Ovary (tissue), 10 donors: ENCODE measurements at regions of chr14 and their contacts with region 1.

Region 1: DNA sequence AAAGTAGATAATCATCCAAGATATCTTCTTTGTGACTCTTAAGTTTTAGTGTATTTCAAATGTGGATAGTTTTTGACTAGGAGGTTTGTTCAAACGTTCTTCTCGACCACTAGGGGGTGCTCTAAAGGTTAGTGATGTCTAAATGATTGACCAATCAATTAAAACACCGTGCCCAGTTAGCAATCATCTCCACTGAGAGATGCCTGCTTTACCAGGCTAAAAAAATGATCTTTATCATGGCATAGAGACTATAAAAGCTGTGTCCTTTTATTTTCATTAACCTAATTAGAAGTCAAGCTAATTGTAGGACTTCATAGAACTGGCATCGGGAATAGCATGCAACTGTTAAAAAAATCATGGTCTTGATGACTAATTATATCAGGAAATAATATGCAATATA is 153.9 kb downstream of the PRKCH start:
- DNase-seq: no peak
- H3K4me3 ChIP-seq: no peak overlapping the region
- H3K27ac ChIP-seq: no peak overlapping the region
- H3K4me1 ChIP-seq: peaks cover 19% of the 10 kb centered on the region
- H3K27me3 ChIP-seq: no peaks in the 10 kb centered on the region
- CTCF ChIP-seq: peak in 2 of 3 donors; percentile 47 to 52
- EP300 ChIP-seq: no peak
- POLR2A ChIP-seq: no peak

Region 2: GRCh38 chr14:61561657-61562276 is 86.5 kb after region 1 on chr14:
- intact Hi-C with region 1: no loop called
- DNase-seq: peak; percentile 56 to 77 (median 70)
- H3K4me3 ChIP-seq: no peak overlapping the region
- H3K27ac ChIP-seq: peak overlapping the region in 1 of 2 donors; percentile 33
- H3K4me1 ChIP-seq: peaks cover 14% of the 10 kb centered on the region
- H3K27me3 ChIP-seq: no peaks in the 10 kb centered on the region
- CTCF ChIP-seq: no peak
- EP300 ChIP-seq: peak; percentile 77
- POLR2A ChIP-seq: no peak

Region 3: DNA sequence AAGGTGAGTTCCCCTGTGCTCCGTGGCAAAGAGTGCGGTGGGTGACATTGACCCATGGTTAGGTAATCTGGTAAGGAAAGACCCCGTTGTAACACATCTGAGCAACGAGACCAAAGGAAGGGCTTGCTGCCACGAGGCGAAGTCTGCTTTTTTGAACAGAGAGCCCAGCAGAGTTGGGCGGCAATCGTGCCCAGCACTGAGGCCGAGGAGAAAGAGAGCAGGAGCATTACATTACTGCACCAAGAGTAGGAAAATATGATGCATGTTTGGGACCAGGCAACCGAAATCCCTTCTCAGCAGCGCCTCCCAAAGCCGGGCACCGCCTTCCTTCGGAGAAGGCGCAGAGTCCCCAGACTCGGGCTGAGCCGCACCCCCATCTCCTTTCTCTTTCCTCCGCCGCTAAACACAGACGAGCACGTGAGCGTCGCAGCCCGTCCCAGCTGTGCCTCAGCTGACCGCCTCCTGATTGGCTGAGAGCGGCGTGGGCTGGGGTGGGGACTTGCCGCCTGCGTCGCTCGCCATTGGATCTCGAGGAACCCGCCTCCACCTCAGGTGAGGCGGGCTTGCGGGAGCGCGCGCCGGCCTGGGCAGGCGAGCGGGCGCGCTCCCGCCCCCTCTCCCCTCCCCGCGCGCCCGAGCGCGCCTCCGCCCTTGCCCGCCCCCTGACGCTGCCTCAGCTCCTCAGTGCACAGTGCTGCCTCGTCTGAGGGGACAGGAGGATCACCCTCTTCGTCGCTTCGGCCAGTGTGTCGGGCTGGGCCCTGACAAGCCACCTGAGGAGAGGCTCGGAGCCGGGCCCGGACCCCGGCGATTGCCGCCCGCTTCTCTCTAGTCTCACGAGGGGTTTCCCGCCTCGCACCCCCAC is 219.7 kb after region 1 on chr14 and contains the start of gene HIF1A:
- intact Hi-C with region 1: loop called in 1 of 4 experiments (anchors 10 kb)
- DNase-seq: peak; percentile 95 to 97 (median 95)
- H3K4me3 ChIP-seq: peak within 1 kb of the TSS; percentile 96
- H3K27ac ChIP-seq: peak within 1 kb of the TSS; percentile 83 to 95
- H3K4me1 ChIP-seq: peaks cover 3% of the 10 kb centered on the region
- H3K27me3 ChIP-seq: no peaks in the 10 kb centered on the region
- CTCF ChIP-seq: peak in 1 of 3 donors; percentile 11
- EP300 ChIP-seq: peak; percentile 37
- POLR2A ChIP-seq: peak; percentile 90
- total RNA-seq, gene HIF1A: 85.1 to 204 (median 116) TPM